ENCODE measurements at regions of chr14 and their contacts with region 1.

Region 1: GRCh38 chr14:54396493-54397335 is at the start of gene CDKN3:
- DNase-seq: peak; percentile 99
- H3K4me3 Mint-ChIP-seq: peak within 1 kb of the TSS; percentile 87
- H3K27ac Mint-ChIP-seq: peak within 1 kb of the TSS; percentile 78
- H3K4me1 Mint-ChIP-seq: peaks cover 26% of the 10 kb centered on the region
- H3K27me3 Mint-ChIP-seq: no peaks in the 10 kb centered on the region
- total RNA-seq, gene CDKN3: 76.3 to 79.6 TPM

Region 2: GRCh38 chr14:54147282-54147681 is 249.4 kb before region 1 on chr14:
- CTCF ChIA-PET with region 1: no interaction called
- POLR2A ChIA-PET with region 1: no interaction called
- DNase-seq: no peak
- H3K4me3 Mint-ChIP-seq: no peak overlapping the region
- H3K27ac Mint-ChIP-seq: no peak overlapping the region
- H3K4me1 Mint-ChIP-seq: no peaks in the 10 kb centered on the region
- H3K27me3 Mint-ChIP-seq: no peaks in the 10 kb centered on the region

Region 3: GRCh38 chr14:54338696-54339317 is 57.9 kb before region 1 on chr14:
- CTCF ChIA-PET with region 1: no interaction called
- POLR2A ChIA-PET with region 1: no interaction called
- DNase-seq: no peak
- H3K4me3 Mint-ChIP-seq: no peak overlapping the region
- H3K27ac Mint-ChIP-seq: no peak overlapping the region
- H3K4me1 Mint-ChIP-seq: no peaks in the 10 kb centered on the region
- H3K27me3 Mint-ChIP-seq: peaks cover 23% of the 10 kb centered on the region

Region 4: DNA sequence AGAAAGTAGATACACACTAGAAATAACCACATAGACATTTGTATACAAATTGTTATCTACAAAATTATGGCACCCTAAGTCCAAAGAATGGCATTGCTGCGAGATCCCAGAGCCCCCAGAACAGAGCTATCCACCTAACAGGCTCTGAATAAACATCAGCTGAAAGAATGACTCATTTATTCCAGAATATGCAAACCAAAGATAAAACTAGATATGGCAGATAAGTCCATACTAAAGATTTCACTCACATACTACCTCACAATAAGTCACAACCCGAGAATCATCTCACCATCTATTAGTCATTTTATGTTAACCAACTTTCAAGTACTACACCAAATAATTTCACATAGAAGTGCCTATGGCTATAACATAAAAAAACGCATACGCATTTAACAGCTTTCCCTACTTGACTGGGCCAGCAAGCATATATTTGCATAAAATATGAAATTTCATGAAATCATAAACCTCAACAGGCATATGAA is 38.8 kb after region 1 on chr14:
- CTCF ChIA-PET with region 1: interaction called, 12 read pairs
- POLR2A ChIA-PET with region 1: interaction called, 25 read pairs
- DNase-seq: no peak
- H3K4me3 Mint-ChIP-seq: peak overlapping the region; percentile 18
- H3K27ac Mint-ChIP-seq: peak overlapping the region; percentile 38
- H3K4me1 Mint-ChIP-seq: peaks cover 52% of the 10 kb centered on the region
- H3K27me3 Mint-ChIP-seq: no peaks in the 10 kb centered on the region

Region 5: GRCh38 chr14:54440873-54441868 is 44.5 kb after region 1 on chr14 and contains the start of gene CNIH1:
- CTCF ChIA-PET with region 1: interaction called, 12 read pairs
- POLR2A ChIA-PET with region 1: interaction called, 25 read pairs
- DNase-seq: peak; percentile 94
- H3K4me3 Mint-ChIP-seq: peak within 1 kb of the TSS; percentile 81
- H3K27ac Mint-ChIP-seq: peak within 1 kb of the TSS; percentile 83
- H3K4me1 Mint-ChIP-seq: peaks cover 41% of the 10 kb centered on the region
- H3K27me3 Mint-ChIP-seq: peaks cover 7% of the 10 kb centered on the region
- total RNA-seq, gene CNIH1: 66.2 to 69.2 TPM

Region 6: GRCh38 chr14:54488646-54489317 is 92.1 kb after region 1 on chr14 and contains the start of gene GMFB:
- CTCF ChIA-PET with region 1: interaction called, 3 read pairs
- POLR2A ChIA-PET with region 1: interaction called, 34 read pairs
- DNase-seq: peak; percentile 92
- H3K4me3 Mint-ChIP-seq: peak within 1 kb of the TSS; percentile 85
- H3K27ac Mint-ChIP-seq: peak within 1 kb of the TSS; percentile 86
- H3K4me1 Mint-ChIP-seq: peaks cover 58% of the 10 kb centered on the region
- H3K27me3 Mint-ChIP-seq: no peaks in the 10 kb centered on the region
- total RNA-seq, gene GMFB: 35.1 to 37.1 TPM

Region 7: GRCh38 chr14:54516734-54517133 is 120.0 kb after region 1 on chr14:
- CTCF ChIA-PET with region 1: no interaction called
- POLR2A ChIA-PET with region 1: no interaction called
- DNase-seq: no peak
- H3K4me3 Mint-ChIP-seq: no peak overlapping the region
- H3K27ac Mint-ChIP-seq: no peak overlapping the region
- H3K4me1 Mint-ChIP-seq: peaks cover 12% of the 10 kb centered on the region
- H3K27me3 Mint-ChIP-seq: no peaks in the 10 kb centered on the region

Measured in activated CD4-positive, alpha-beta memory T cell treated with anti-CD3 and anti-CD28 coated beads, Interleukin-2, amount 10 ng/mL, durations not matched to agents 7 days and 5 days (primary cell).